ENCODE measurements at regions of chr2 and their contacts with region 1.

Region 1: DNA sequence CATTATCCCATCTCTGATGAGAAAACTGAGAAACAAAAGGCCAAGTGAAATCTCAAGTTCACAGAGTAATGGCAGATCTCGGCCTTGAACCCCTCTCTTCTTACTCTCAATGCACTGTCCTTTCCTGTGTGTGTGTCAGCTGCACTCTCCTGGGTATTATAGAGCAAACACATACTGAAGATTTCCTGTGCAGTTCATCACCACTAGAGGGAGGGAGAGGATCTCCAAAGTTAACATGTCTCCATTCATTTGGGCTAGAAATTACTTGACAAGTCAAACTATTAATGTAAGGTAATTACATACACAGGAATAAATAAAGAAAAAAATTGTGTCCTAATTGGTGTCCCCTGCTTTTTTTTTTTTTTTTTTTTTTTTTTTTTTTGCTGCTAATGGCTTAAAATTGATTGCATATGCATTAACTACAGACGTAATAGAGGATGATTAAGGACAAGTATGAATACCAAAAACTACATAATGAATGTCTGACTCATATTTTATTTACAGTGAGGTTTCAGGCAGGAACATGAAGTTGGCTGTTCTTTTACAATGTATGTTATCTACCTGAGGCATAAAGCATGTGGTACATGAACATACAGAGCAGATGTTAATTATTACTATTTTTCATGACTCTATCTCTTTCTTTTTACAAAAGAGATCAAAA is 269.2 kb downstream of the NYAP2 start:
- DNase-seq: peak; percentile 54
- H3K4me3 ChIP-seq: no peak overlapping the region
- H3K27ac ChIP-seq: no peak overlapping the region
- H3K4me1 ChIP-seq: no peaks in the 10 kb centered on the region
- H3K27me3 ChIP-seq: no peaks in the 10 kb centered on the region
- CTCF ChIP-seq: peak; percentile 45 to 67
- POLR2A ChIP-seq: no peak

Region 2: GRCh38 chr2:225270861-225271260 is 397.9 kb before region 1 on chr2:
- CTCF ChIA-PET with region 1: no interaction called
- POLR2A ChIA-PET with region 1: no interaction called
- dilution Hi-C with region 1: no loop called
- intact Hi-C with region 1: no loop called
- DNase-seq: no peak
- H3K4me3 ChIP-seq: no peak overlapping the region
- H3K27ac ChIP-seq: no peak overlapping the region
- H3K4me1 ChIP-seq: no peaks in the 10 kb centered on the region
- H3K27me3 ChIP-seq: no peaks in the 10 kb centered on the region
- CTCF ChIP-seq: no peak
- POLR2A ChIP-seq: no peak

Region 3: GRCh38 chr2:225797394-225797793 is 128.7 kb after region 1 on chr2:
- CTCF ChIA-PET with region 1: interaction called, 3 read pairs
- POLR2A ChIA-PET with region 1: no interaction called
- dilution Hi-C with region 1: no loop called
- intact Hi-C with region 1: loop called (anchors 1 kb)
- DNase-seq: peak; percentile 7
- H3K4me3 ChIP-seq: no peak overlapping the region
- H3K27ac ChIP-seq: no peak overlapping the region
- H3K4me1 ChIP-seq: no peaks in the 10 kb centered on the region
- H3K27me3 ChIP-seq: peaks cover 1 to 4% of the 10 kb centered on the region in 2 experiments
- CTCF ChIP-seq: no peak
- POLR2A ChIP-seq: no peak

Region 4: DNA sequence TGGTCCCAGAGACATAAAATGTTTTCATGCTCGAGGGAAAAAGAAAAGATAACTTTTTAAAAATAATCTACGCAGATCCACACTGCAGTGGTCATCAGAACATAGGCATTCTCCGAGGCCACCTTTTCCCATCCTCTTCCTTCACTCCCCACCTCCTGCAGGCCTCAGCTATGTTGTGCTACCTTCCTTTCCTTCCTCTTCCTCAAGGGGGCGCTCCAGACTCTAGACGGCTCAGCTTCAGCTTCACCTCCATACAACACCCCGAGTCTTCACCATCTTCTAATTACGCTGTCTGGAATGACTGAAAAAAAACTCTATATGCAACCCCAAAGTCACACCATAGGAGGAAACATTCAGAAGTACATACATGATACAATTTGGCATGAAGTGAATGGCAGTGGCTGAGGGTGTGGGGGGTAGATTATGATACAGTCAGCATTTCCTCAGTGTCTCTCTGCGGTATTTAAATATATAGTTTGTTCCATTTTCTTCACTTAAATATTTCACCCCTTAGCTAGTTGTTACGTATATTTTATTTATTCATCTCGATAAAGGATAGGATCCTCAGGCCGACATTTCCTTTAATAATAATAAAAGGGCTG is 547.3 kb after region 1 on chr2:
- CTCF ChIA-PET with region 1: interaction called, 4 read pairs
- POLR2A ChIA-PET with region 1: no interaction called
- dilution Hi-C with region 1: no loop called
- intact Hi-C with region 1: loop called (anchors 5 kb)
- DNase-seq: peak; percentile 10
- H3K4me3 ChIP-seq: no peak overlapping the region
- H3K27ac ChIP-seq: no peak overlapping the region
- H3K4me1 ChIP-seq: peaks cover 3% of the 10 kb centered on the region
- H3K27me3 ChIP-seq: no peaks in the 10 kb centered on the region
- CTCF ChIP-seq: peak; percentile 23 to 34
- POLR2A ChIP-seq: no peak

Region 5: DNA sequence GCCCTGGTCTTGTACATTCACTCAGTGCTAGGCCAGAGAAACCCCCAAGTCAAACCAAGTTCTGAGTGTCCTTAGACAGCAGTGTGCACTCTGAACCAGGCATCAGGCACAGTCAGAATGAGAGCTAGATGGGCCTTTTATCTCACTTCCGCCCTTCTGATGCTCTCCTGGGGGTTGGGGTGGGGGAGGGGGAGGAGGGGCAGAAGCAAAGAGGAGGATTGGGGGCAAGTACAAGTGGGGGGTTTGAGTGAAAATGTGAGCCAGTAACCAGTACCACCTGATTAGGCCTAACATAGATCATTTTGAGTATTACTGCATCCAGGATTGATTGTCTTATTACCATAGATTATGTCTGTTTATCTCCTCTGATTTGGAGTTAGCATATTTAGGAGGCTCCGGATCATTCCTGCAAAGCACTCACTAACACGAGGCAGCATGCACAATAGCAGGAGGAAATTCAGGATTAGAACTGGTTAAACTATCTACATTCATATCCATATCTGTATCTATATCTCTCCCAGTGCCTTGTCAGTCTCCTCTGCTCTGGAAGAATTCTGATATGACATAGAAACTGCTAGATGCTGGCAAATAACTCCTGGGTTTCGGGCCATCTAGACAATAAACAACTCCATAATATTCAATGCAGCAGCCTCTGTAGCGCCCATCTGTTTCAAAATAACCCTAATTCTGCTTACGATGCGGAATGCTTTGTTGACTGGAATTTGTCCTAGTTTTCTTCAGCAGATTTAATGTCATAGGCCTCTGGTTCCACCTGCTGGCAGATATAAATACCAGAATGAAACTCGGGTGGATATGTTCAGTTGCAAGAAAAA is 1316.2 kb after region 1 on chr2:
- CTCF ChIA-PET with region 1: interaction called, 52 read pairs
- POLR2A ChIA-PET with region 1: no interaction called
- dilution Hi-C with region 1: no loop called
- intact Hi-C with region 1: loop called (anchors 1 kb)
- DNase-seq: peak; percentile 57
- H3K4me3 ChIP-seq: no peak overlapping the region
- H3K27ac ChIP-seq: no peak overlapping the region
- H3K4me1 ChIP-seq: no peaks in the 10 kb centered on the region
- H3K27me3 ChIP-seq: no peaks in the 10 kb centered on the region
- CTCF ChIP-seq: peak; percentile 32 to 42
- POLR2A ChIP-seq: no peak

Region 6: GRCh38 chr2:227238238-227239237 is 1569.8 kb after region 1 on chr2:
- CTCF ChIA-PET with region 1: interaction called, 33 read pairs
- POLR2A ChIA-PET with region 1: no interaction called
- dilution Hi-C with region 1: no loop called
- intact Hi-C with region 1: loop called (anchors 5 kb)
- DNase-seq: peak; percentile 62
- H3K4me3 ChIP-seq: no peak overlapping the region
- H3K27ac ChIP-seq: no peak overlapping the region
- H3K4me1 ChIP-seq: no peaks in the 10 kb centered on the region
- H3K27me3 ChIP-seq: no peaks in the 10 kb centered on the region
- CTCF ChIP-seq: peak; percentile 86 to 95
- POLR2A ChIP-seq: no peak